ENCODE measurements at regions of chr12 and their contacts with region 1.

Region 1: DNA sequence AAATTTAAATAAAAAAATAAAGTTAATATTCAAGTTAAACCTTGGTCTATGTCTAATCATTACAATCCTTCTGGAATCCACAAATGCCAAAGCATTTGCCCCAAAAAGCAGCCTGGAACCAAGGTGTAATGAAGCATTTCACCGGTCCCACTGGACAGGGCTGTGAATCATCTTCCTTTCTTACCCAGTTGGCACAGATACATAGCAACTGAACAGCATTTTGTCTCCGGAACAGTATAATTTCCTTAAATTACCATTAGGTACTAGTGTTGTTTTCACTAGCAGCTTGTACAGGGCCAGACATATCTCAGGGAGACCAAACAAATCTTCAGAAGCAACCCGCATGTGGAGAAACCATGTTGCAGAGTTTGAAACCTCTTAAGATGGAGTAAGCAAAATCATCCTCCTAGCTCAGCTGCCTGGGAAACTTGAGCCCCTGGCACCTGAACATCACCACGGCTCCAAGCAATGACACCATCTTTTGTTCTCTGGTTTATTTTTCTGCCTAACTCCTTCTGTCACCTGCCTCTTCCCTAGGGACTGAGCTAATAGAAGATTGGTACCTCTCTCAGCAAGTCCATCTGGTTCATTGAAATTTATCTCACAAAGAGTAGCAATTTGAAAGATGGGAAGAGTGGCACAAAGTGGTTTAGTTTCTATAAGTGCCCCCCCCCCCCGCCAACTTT is 17.9 kb upstream of the MDM1 start:
- DNase-seq: no peak

Region 2: GRCh38 chr12:68163560-68164081 is 186.4 kb before region 1 on chr12:
- in situ Hi-C with region 1: no loop called
- DNase-seq: no peak

Region 3: DNA sequence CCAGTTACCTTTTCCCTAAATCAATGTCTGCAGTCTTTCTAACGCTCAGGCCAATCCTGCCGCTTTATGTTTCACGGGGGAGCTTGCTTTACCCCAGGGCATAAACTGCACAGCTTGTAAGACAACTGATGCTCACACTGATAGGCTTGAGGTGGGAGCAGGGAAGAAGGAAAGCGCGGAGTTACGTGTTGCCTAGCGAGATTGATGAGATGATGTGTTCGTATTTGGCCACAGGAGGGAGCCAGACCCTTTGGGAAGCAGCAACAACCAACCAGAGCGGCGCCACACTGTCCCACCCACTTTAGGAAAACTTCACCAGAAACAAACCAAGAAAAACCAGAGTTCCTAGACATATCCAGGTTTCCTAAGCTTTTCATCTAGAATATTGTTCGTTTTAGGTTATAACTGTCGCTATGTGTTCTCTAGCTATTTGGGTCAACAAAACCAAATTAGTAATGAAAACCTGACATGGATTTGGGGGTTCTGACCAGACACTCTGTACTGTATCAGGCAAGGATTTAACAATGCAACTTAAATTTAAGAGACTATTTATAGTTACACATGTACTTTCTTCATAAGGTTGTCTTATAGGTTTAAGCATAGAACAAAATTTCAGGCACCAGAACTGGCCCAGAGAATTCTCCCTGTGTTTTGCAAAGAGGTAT is 126.8 kb before region 1 on chr12:
- in situ Hi-C with region 1: loop called (anchors 10 kb)
- DNase-seq: peak; percentile 92

Region 4: GRCh38 chr12:68240597-68241374 is 109.3 kb before region 1 on chr12:
- in situ Hi-C with region 1: no loop called
- DNase-seq: peak; percentile 69

Region 5: GRCh38 chr12:68290126-68290525 is 59.9 kb before region 1 on chr12:
- in situ Hi-C with region 1: no loop called
- DNase-seq: no peak

Region 6: DNA sequence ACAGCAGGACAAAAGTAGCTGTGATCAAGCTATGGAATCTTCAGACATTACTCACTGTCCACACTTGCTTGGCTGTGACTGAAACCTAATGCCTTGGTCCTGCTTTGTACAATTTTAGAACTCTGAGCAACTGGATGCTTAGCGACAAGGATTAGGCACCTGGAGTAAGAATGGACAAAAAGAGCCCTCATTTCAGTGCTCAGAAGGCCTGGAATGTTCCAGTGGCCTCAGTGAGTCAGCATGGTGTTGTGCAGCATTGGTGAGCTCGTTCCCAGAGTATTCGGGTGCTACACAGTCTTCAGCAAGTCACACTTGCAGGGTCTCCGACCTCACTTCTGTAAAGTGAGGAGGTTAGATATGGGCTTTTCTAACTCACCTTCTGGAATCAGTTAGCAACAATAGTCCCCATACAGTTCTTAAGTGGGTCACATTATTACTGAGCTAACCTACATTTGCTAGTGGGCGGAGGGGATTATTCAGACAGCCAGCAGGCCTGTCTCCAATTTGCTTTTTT is 90.1 kb after region 1 on chr12:
- in situ Hi-C with region 1: no loop called
- DNase-seq: no peak